ENCODE measurements at regions of chr20 and their contacts with region 1.

Region 1: DNA sequence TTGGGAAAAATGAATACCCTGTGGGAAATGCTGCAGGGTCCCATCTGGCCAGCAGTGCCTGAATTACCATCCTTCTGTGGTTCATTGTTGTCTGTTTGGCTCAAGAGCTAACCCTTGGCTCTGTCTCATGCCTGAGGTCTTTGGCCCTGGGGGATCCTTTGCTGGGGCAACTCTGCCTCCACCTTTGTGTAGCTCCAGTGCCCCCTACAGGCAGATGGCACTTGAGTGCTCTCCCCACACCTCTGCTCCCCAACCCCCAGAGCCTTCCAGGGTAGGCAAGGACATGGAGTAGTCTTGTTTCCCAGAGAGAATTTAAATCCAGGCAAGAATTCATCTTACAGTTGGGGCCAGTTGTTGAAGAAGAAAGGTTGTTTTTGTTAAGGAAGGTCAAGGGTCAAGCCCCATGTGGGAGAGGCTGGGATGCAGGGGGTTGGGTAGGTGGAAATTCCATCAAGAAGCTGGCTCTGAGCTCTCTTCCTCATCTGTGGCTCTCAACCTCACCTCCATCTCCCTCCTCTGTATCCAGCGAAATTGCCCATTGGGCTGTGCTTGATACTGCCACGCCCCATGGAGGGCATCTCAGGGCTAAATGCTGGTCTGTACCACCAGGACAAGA is 44.2 kb downstream of the ZNF831 start:
- DNase-seq: peak; percentile 90
- H3K4me3 ChIP-seq: no peak overlapping the region
- H3K27ac ChIP-seq: no peak overlapping the region
- H3K4me1 ChIP-seq: peaks cover 0 to 14% (median 0%) of the 10 kb centered on the region in 6 donors
- H3K27me3 ChIP-seq: no peaks in the 10 kb centered on the region
- CTCF ChIP-seq: peak; percentile 62 to 87 (median 75)
- POLR2A ChIP-seq: no peak

Region 2: DNA sequence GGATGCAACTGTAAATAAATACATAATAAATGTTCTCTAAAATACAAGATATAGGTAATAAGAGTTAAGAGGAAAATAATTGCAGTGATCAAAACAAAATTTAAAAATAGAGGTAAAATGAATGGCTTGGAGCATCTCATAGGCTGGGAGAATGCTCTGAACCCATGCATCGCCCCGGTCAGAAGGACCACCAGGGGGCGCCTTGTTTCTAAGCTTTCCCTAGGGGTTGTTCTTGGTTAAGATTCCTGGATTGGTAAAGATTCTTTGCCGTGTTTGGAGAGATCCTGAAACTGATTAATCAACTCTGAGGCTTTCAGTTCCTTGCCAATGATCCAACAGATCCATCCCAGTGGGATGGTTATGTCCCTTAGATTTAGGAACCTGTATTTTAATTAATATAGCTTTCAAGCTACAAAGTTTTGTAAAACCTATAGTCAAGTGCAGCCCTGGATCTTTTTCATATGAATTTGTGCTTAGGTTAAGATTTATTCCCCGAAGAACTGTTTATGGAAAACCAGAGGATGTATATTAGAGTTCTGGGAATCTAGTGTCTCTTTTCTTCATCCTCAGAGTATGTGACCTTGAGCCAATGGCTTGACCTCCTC is 119.9 kb before region 1 on chr20:
- intact Hi-C with region 1: loop called (anchors 2 kb)
- DNase-seq: peak; percentile 95
- H3K4me3 ChIP-seq: no peak overlapping the region
- H3K27ac ChIP-seq: no peak overlapping the region
- H3K4me1 ChIP-seq: peaks cover 0 to 13% (median 8%) of the 10 kb centered on the region in 6 donors
- H3K27me3 ChIP-seq: no peaks in the 10 kb centered on the region
- CTCF ChIP-seq: peak; percentile 69 to 98 (median 95)
- POLR2A ChIP-seq: no peak

Region 3: GRCh38 chr20:59356662-59357165 is 148.9 kb after region 1 on chr20:
- intact Hi-C with region 1: no loop called
- DNase-seq: peak; percentile 49
- H3K4me3 ChIP-seq: no peak overlapping the region
- H3K27ac ChIP-seq: no peak overlapping the region
- H3K4me1 ChIP-seq: peaks cover 0 to 23% (median 9%) of the 10 kb centered on the region in 6 donors
- H3K27me3 ChIP-seq: peaks cover 0 to 16% (median 0%) of the 10 kb centered on the region in 7 donors
- CTCF ChIP-seq: no peak
- POLR2A ChIP-seq: no peak

Region 4: DNA sequence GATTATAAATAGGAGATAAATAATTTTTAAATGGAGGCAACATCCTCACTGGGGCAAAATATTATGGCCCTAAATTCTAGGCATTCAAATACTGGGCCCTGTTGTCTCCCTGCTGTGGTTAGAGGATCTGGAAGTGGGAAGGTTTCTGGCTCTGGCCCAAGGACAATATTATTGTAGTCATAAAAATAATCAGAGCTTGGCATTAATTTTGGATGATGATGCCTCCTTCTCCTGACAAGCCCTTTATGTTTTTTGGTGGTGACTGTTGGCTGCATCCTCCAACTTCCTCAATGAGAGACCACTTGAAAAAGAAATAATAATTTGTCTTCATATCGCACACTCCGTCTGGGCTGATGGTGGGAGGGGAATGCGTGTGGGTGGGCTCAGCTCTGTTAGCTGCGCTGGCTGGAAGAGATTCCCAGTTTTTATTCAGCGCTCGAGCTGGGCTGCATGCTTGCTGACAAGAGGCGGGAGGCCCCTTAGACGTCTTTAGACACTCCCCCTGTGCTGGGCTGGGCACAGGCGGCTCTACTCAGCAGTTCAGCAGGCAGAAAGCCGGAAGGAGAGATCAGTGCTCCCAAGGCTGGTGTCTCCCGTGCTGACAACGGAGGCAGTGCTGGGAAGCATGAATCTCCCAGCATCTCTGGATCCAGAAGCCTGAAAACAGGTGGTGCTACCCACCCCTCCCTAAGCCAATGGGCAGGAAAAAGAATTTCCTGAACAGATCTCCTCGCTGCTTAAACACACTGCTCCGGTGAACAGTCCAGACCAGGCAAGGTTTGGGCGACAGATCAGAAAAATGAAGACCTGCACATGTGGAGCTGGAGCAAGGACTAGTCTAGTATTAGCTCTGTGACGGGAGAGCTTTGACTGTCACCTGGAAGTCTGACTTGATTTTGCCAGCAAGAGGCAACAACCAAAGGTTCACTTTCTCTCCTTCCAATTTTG is 627.9 kb after region 1 on chr20:
- intact Hi-C with region 1: no loop called
- DNase-seq: peak; percentile 72
- H3K4me3 ChIP-seq: peak overlapping the region in 1 of 8 donors; percentile 13
- H3K27ac ChIP-seq: peak overlapping the region in 4 of 8 donors; percentile 20 to 34 (median 26)
- H3K4me1 ChIP-seq: peaks cover 4 to 33% (median 17%) of the 10 kb centered on the region in 6 donors
- H3K27me3 ChIP-seq: peaks cover 0 to 80% (median 0%) of the 10 kb centered on the region in 7 donors
- CTCF ChIP-seq: no peak
- POLR2A ChIP-seq: no peak